ENCODE measurements at regions of chr1 and their contacts with region 1.

Region 1: DNA sequence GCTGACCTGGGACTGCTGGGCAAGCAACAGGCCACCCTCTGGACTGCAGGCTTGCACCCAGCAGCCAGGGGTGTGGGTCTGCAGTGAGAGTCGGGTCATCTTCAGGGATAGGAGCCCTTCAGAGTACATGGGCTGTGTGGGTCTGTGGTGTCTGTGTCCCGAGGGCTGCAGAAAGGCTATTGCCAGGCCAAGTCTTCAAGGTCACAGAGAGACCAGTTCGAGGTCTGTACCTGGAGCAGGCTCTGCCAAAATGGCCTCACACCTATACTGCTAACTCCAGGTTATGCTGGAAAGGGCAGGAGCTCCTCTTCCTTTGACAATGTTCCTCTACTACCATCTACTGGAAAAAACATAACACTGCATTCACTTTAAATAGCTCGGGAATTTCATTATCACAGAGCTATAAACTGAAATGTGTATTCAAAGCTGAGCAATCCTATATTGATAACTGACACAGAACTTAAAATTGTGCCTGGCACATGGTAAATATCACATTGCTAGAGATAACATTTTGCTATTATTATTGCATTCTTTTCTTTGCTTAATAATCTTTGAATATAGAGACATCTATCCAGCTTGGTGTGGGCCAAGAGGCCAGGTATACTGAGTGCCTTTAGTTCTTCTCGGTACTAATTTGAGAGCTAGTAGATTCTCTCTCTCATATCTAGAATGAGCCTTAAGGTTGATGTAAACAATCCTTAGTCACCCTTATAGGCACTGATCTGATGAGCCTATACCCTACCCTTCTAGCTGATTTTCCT is 6.9 kb upstream of the DNAH14 start:
- DNase-seq: peak in 2 of 9 experiments; percentile 18 to 39
- ATAC-seq: no peak
- H3K4me3 ChIP-seq: no peak overlapping the region
- H3K4me3 Mint-ChIP-seq: no peak overlapping the region
- H3K27ac ChIP-seq: no peak overlapping the region
- H3K27ac Mint-ChIP-seq: no peak overlapping the region
- H3K4me1 ChIP-seq: no peaks in the 10 kb centered on the region
- H3K4me1 Mint-ChIP-seq: no peaks in the 10 kb centered on the region
- H3K27me3 ChIP-seq: no peaks in the 10 kb centered on the region
- H3K27me3 Mint-ChIP-seq: peaks cover 5% of the 10 kb centered on the region
- CTCF ChIP-seq: peak; percentile 62

Region 2: GRCh38 chr1:224542783-224543440 is 379.7 kb before region 1 on chr1:
- CTCF ChIA-PET with region 1: no interaction called
- POLR2A ChIA-PET with region 1: no interaction called
- intact Hi-C with region 1: no loop called
- DNase-seq: peak in 2 of 9 experiments; percentile 3 to 22
- ATAC-seq: peak; percentile 69
- H3K4me3 ChIP-seq: no peak overlapping the region
- H3K4me3 Mint-ChIP-seq: no peak overlapping the region
- H3K27ac ChIP-seq: no peak overlapping the region
- H3K27ac Mint-ChIP-seq: no peak overlapping the region
- H3K4me1 ChIP-seq: no peaks in the 10 kb centered on the region
- H3K4me1 Mint-ChIP-seq: peaks cover 4% of the 10 kb centered on the region
- H3K27me3 ChIP-seq: no peaks in the 10 kb centered on the region
- H3K27me3 Mint-ChIP-seq: peaks cover 3% of the 10 kb centered on the region
- CTCF ChIP-seq: no peak

Region 3: GRCh38 chr1:224938652-224939051 is 16.1 kb after region 1 on chr1:
- CTCF ChIA-PET with region 1: no interaction called
- POLR2A ChIA-PET with region 1: no interaction called
- intact Hi-C with region 1: loop called in 1 of 2 experiments (anchors 1 kb)
- DNase-seq: no peak
- ATAC-seq: no peak
- H3K4me3 ChIP-seq: no peak overlapping the region
- H3K4me3 Mint-ChIP-seq: no peak overlapping the region
- H3K27ac ChIP-seq: no peak overlapping the region
- H3K27ac Mint-ChIP-seq: no peak overlapping the region
- H3K4me1 ChIP-seq: no peaks in the 10 kb centered on the region
- H3K4me1 Mint-ChIP-seq: no peaks in the 10 kb centered on the region
- H3K27me3 ChIP-seq: no peaks in the 10 kb centered on the region
- H3K27me3 Mint-ChIP-seq: peaks cover 15% of the 10 kb centered on the region
- CTCF ChIP-seq: no peak